ENCODE measurements at regions of chr5 and their contacts with region 1.

Region 1: GRCh38 chr5:36264202-36264760 is 22.6 kb upstream of the NADK2 start:
- DNase-seq: no peak
- ATAC-seq: no peak
- H3K4me3 Mint-ChIP-seq: no peak overlapping the region
- H3K27ac Mint-ChIP-seq: no peak overlapping the region
- H3K4me1 Mint-ChIP-seq: no peaks in the 10 kb centered on the region
- H3K27me3 Mint-ChIP-seq: peaks cover 14% of the 10 kb centered on the region
- CTCF ChIP-seq: no peak

Region 2: DNA sequence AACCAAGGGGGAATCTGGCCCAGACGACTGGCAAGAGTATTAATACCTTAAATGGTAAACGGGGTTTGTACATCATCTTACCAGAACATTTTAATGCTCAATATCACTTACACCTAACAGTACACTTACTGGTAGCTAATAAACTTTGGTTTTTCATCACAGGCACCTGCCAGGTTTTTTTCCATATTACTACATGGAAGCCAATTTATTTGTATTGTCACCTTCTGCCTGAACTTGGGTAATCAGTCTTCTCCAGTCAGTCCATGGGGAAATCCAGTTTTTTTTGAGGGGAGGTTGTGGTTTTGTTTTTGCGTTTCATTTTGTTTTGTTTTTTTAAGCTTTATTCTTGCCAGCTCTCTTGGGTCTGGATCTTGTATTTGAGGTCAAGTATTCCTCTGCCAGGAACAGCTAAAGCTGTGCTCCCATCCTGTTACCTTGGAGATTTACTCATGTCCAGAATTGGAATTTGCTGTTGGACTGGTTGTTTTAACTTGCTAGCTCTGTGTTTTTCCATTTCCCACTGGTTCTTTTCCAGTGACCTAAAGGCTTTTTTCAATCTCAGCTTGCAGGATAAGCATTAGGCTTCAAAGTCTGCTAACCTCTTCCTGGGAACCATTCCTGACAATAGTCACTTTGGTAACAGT is 11.4 kb before region 1 on chr5:
- CTCF ChIA-PET with region 1: interaction called, 25 read pairs
- POLR2A ChIA-PET with region 1: no interaction called
- intact Hi-C with region 1: no loop called
- DNase-seq: no peak
- ATAC-seq: no peak
- H3K4me3 Mint-ChIP-seq: no peak overlapping the region
- H3K27ac Mint-ChIP-seq: no peak overlapping the region
- H3K4me1 Mint-ChIP-seq: no peaks in the 10 kb centered on the region
- H3K27me3 Mint-ChIP-seq: peaks cover 5% of the 10 kb centered on the region
- CTCF ChIP-seq: no peak

Region 3: GRCh38 chr5:36298516-36298915 is 34.2 kb after region 1 on chr5:
- CTCF ChIA-PET with region 1: interaction called, 13 read pairs
- POLR2A ChIA-PET with region 1: no interaction called
- intact Hi-C with region 1: no loop called
- DNase-seq: no peak
- ATAC-seq: no peak
- H3K4me3 Mint-ChIP-seq: no peak overlapping the region
- H3K27ac Mint-ChIP-seq: no peak overlapping the region
- H3K4me1 Mint-ChIP-seq: peaks cover 6% of the 10 kb centered on the region
- H3K27me3 Mint-ChIP-seq: peaks cover 6% of the 10 kb centered on the region
- CTCF ChIP-seq: no peak

Region 4: DNA sequence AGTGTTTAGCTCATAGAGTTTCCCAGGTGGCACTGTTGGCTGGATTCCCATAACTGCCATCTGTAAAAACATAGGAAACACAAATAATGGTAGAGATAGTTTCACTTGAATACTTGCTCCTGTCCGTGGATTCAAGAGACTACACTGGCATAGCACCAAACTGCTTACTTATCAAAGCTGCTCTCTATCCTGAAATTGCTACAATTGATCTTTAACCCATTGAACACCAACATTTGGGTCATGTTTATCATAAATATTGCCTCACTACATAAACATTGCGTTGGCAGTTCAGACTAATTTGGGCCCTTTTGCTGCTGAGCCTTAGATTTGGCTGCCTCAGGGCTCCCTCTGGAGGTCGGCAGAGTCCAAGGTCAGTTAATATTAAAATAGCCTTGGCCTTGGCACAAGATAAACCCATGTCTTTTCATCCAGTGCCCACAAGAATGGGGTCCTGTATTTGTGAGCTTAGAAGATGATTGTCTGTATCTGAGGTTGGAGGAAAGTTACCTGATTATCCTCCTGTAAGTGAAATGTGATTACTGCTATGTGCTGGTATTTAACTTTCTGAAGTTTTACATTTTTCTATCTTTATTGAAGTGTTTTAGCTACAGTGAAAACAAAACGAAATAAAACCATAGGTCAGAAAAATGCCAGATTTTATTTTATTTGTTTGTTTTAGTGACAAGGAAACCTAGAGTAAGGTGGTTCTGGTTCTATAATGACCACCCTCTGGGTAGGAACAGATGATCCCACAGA is 41.5 kb after region 1 on chr5:
- CTCF ChIA-PET with region 1: interaction called, 12 read pairs
- POLR2A ChIA-PET with region 1: no interaction called
- intact Hi-C with region 1: loop called (anchors 2 kb)
- DNase-seq: peak; percentile 39
- ATAC-seq: peak; percentile 37
- H3K4me3 Mint-ChIP-seq: no peak overlapping the region
- H3K27ac Mint-ChIP-seq: no peak overlapping the region
- H3K4me1 Mint-ChIP-seq: peaks cover 6% of the 10 kb centered on the region
- H3K27me3 Mint-ChIP-seq: peaks cover 1% of the 10 kb centered on the region
- CTCF ChIP-seq: peak; percentile 42

Region 5: GRCh38 chr5:36507332-36507952 is 243.2 kb after region 1 on chr5:
- CTCF ChIA-PET with region 1: interaction called, 19 read pairs
- POLR2A ChIA-PET with region 1: interaction called, 3 read pairs
- intact Hi-C with region 1: loop called (anchors 10 kb)
- DNase-seq: peak; percentile 86
- ATAC-seq: no peak
- H3K4me3 Mint-ChIP-seq: no peak overlapping the region
- H3K27ac Mint-ChIP-seq: no peak overlapping the region
- H3K4me1 Mint-ChIP-seq: no peaks in the 10 kb centered on the region
- H3K27me3 Mint-ChIP-seq: peaks cover 7% of the 10 kb centered on the region
- CTCF ChIP-seq: peak; percentile 85